ENCODE measurements at regions of chr6 and their contacts with region 1.

Region 1: DNA sequence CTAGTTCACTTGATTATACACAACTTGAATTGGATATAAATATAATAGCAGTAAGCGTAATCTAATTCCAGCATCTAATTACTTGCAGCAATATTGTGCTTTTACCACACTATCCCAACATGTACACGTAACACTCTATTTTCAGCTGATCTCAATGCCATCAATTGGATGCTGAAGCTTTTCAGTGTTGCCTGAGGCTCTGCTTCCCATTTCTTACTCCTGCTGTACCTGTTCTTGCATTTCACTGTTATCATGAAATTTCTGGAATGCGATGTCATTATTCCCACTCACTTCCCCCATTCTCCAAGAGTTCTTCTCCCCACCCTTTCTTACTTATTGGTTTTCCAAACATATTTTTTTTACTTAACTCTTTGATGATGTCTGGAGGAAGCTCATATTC is 652.3 kb upstream of the IMPG1 start:
- DNase-seq: no peak
- H3K4me3 ChIP-seq: no peak overlapping the region
- H3K27ac ChIP-seq: no peak overlapping the region
- H3K4me1 ChIP-seq: no peaks in the 10 kb centered on the region
- H3K27me3 ChIP-seq: no peaks in the 10 kb centered on the region
- CTCF ChIP-seq: no peak

Region 2: GRCh38 chr6:75128878-75129570 is 1595.7 kb before region 1 on chr6:
- CTCF ChIA-PET with region 1: no interaction called
- POLR2A ChIA-PET with region 1: no interaction called
- intact Hi-C with region 1: no loop called
- DNase-seq: no peak
- H3K4me3 ChIP-seq: no peak overlapping the region
- H3K27ac ChIP-seq: no peak overlapping the region
- H3K4me1 ChIP-seq: peaks cover 5% of the 10 kb centered on the region
- H3K27me3 ChIP-seq: no peaks in the 10 kb centered on the region
- CTCF ChIP-seq: no peak

Region 3: GRCh38 chr6:76708619-76709331 is 16.0 kb before region 1 on chr6:
- CTCF ChIA-PET with region 1: no interaction called
- POLR2A ChIA-PET with region 1: no interaction called
- intact Hi-C with region 1: no loop called
- DNase-seq: no peak
- H3K4me3 ChIP-seq: no peak overlapping the region
- H3K27ac ChIP-seq: no peak overlapping the region
- H3K4me1 ChIP-seq: no peaks in the 10 kb centered on the region
- H3K27me3 ChIP-seq: no peaks in the 10 kb centered on the region
- CTCF ChIP-seq: no peak

Region 4: DNA sequence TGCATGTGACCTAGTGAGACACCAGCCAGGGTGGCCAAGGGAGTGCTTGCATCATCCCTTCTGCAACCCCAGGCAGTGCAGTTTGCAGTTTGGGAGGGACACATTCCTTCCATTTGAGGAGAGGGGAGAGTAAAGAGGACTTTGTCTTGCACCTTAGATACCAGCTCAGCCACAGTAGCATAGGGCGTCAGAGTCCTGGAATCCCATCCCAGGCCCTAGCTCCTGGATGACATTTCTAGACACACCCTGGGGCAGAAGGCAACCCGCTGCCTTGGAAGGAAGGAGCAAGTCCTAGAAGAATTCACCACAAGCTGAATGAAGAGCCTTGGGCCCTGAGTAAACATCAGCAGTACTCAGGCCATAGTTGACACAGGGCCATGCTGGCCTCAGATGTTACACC is 28.1 kb after region 1 on chr6:
- CTCF ChIA-PET with region 1: no interaction called
- POLR2A ChIA-PET with region 1: no interaction called
- intact Hi-C with region 1: loop called (anchors 2 kb)
- DNase-seq: no peak
- H3K4me3 ChIP-seq: no peak overlapping the region
- H3K27ac ChIP-seq: no peak overlapping the region
- H3K4me1 ChIP-seq: no peaks in the 10 kb centered on the region
- H3K27me3 ChIP-seq: no peaks in the 10 kb centered on the region
- CTCF ChIP-seq: no peak

Measured in A673 (cell line).